Ovary (tissue), 10 donors: ENCODE measurements at regions of chr16 and their contacts with region 1.

Region 1: DNA sequence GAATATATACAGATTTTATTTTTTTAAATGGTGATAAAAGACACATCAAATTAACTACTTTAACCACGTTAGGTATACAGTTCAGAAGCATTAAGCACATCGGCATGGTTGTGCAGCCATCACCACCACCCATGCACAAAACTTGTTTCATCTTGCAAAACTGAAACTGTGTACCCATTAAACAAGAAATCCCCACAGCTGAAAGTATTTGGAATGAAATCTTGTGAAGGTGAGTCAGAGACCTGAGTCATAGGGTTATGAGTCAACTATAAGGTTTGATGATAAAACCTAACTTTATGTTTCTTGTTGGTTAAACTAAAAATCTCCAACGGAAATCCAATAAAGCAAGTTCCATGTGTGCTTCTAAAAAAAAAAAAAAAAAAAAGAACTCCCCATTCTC is 561.6 kb upstream of the PSMD7 start:
- DNase-seq: no peak
- H3K4me3 ChIP-seq: no peak overlapping the region
- H3K27ac ChIP-seq: no peak overlapping the region
- H3K4me1 ChIP-seq: no peaks in the 10 kb centered on the region
- H3K27me3 ChIP-seq: no peaks in the 10 kb centered on the region
- CTCF ChIP-seq: no peak
- EP300 ChIP-seq: no peak
- POLR2A ChIP-seq: no peak

Region 2: DNA sequence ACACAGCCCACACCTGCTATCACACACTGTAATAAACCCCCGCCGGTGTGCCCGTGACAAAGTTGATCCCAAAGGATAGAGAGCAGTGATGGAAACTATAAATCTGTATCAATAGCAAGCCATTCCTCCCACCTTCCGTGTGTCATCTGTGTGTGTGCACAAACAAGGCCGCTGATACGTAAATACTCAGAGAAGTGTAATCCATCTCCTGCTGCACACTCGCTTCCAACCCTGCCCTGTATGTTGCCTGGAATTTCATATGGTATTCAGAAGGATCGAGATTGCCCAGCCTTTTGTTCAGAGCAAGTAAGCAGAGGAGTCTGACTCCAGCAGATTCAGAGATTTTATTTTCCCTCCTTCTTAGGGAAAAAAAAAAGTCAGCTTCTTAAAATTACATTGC is 106.0 kb before region 1 on chr16:
- intact Hi-C with region 1: no loop called
- DNase-seq: no peak
- H3K4me3 ChIP-seq: no peak overlapping the region
- H3K27ac ChIP-seq: no peak overlapping the region
- H3K4me1 ChIP-seq: no peaks in the 10 kb centered on the region
- H3K27me3 ChIP-seq: no peaks in the 10 kb centered on the region
- CTCF ChIP-seq: no peak
- EP300 ChIP-seq: no peak
- POLR2A ChIP-seq: no peak

Region 3: GRCh38 chr16:73669535-73670274 is 65.3 kb before region 1 on chr16:
- intact Hi-C with region 1: loop called in 1 of 4 experiments (anchors 10 kb)
- DNase-seq: no peak
- H3K4me3 ChIP-seq: no peak overlapping the region
- H3K27ac ChIP-seq: no peak overlapping the region
- H3K4me1 ChIP-seq: no peaks in the 10 kb centered on the region
- H3K27me3 ChIP-seq: no peaks in the 10 kb centered on the region
- CTCF ChIP-seq: no peak
- EP300 ChIP-seq: no peak
- POLR2A ChIP-seq: no peak

Region 4: GRCh38 chr16:73768786-73769203 is 33.8 kb after region 1 on chr16:
- intact Hi-C with region 1: loop called in 1 of 4 experiments (anchors 1 kb)
- DNase-seq: peak in 1 of 5 donors; percentile 14
- H3K4me3 ChIP-seq: no peak overlapping the region
- H3K27ac ChIP-seq: no peak overlapping the region
- H3K4me1 ChIP-seq: peaks cover 1% of the 10 kb centered on the region
- H3K27me3 ChIP-seq: no peaks in the 10 kb centered on the region
- CTCF ChIP-seq: no peak
- EP300 ChIP-seq: no peak
- POLR2A ChIP-seq: no peak

Region 5: GRCh38 chr16:74257061-74257460 is 522.0 kb after region 1 on chr16:
- intact Hi-C with region 1: no loop called
- DNase-seq: no peak
- H3K4me3 ChIP-seq: no peak overlapping the region
- H3K27ac ChIP-seq: no peak overlapping the region
- H3K4me1 ChIP-seq: no peaks in the 10 kb centered on the region
- H3K27me3 ChIP-seq: no peaks in the 10 kb centered on the region
- CTCF ChIP-seq: no peak
- EP300 ChIP-seq: no peak
- POLR2A ChIP-seq: no peak